ENCODE measurements at regions of chr7 and their contacts with region 1.

Region 1: GRCh38 chr7:13279854-13280435 is 592.5 kb downstream of the ARL4A start:
- DNase-seq: no peak
- H3K4me3 Mint-ChIP-seq: no peak overlapping the region
- H3K27ac Mint-ChIP-seq: no peak overlapping the region
- H3K4me1 Mint-ChIP-seq: no peaks in the 10 kb centered on the region
- H3K27me3 Mint-ChIP-seq: no peaks in the 10 kb centered on the region
- CTCF ChIP-seq: peak; percentile 59

Region 2: DNA sequence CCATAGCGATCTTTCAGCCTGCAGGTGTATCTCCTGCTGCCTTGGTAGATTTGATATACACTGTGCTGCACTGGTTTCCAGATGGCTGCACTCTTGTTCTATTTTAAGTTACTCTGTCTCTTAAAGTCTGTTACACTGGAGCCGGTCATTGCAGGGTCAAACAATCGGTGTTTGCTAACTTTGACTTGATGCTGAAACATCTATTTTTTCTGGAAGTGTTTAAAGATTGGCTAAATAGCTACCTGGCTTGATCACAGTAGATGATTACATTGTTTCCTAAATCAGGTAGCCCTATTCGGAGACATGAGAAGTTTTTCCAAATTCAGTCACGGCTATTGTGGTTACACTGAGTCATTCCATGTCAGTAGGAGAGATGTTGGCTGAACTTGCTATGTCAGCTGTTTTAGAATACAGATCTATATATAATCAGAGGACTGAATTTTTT is 134.7 kb after region 1 on chr7:
- CTCF ChIA-PET with region 1: no interaction called
- intact Hi-C with region 1: loop called (anchors 5 kb)
- DNase-seq: peak; percentile 19
- H3K4me3 Mint-ChIP-seq: no peak overlapping the region
- H3K27ac Mint-ChIP-seq: no peak overlapping the region
- H3K4me1 Mint-ChIP-seq: peaks cover 10% of the 10 kb centered on the region
- H3K27me3 Mint-ChIP-seq: no peaks in the 10 kb centered on the region
- CTCF ChIP-seq: no peak

Region 3: DNA sequence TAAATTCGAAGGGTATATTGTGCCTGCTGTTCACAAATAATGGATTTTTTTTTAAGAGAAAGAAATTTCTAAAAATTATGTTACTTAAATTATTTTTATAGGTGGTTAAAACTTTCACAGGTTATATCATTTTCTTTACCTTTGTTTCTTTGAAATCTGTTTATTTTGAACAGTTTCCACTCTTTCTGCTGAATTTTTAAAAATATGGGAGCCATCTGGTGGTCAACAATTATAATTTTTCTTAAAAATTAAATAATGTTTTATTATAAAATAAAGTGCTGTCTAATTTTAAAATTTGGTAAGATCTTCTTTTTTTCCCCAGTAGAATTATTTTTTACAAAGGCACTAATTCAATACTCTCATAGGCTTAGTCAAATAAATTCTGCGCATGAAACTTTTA is 445.6 kb after region 1 on chr7:
- CTCF ChIA-PET with region 1: interaction called, 4 read pairs
- intact Hi-C with region 1: loop called (anchors 1 kb)
- DNase-seq: no peak
- H3K4me3 Mint-ChIP-seq: no peak overlapping the region
- H3K27ac Mint-ChIP-seq: no peak overlapping the region
- H3K4me1 Mint-ChIP-seq: peaks cover 15% of the 10 kb centered on the region
- H3K27me3 Mint-ChIP-seq: no peaks in the 10 kb centered on the region
- CTCF ChIP-seq: peak; percentile 43

Region 4: GRCh38 chr7:13990984-13991790 is 711.2 kb after region 1 on chr7:
- CTCF ChIA-PET with region 1: no interaction called
- intact Hi-C with region 1: loop called (anchors 5 kb)
- DNase-seq: peak; percentile 99
- H3K4me3 Mint-ChIP-seq: no peak overlapping the region
- H3K27ac Mint-ChIP-seq: no peak overlapping the region
- H3K4me1 Mint-ChIP-seq: no peaks in the 10 kb centered on the region
- H3K27me3 Mint-ChIP-seq: no peaks in the 10 kb centered on the region
- CTCF ChIP-seq: no peak

Region 5: DNA sequence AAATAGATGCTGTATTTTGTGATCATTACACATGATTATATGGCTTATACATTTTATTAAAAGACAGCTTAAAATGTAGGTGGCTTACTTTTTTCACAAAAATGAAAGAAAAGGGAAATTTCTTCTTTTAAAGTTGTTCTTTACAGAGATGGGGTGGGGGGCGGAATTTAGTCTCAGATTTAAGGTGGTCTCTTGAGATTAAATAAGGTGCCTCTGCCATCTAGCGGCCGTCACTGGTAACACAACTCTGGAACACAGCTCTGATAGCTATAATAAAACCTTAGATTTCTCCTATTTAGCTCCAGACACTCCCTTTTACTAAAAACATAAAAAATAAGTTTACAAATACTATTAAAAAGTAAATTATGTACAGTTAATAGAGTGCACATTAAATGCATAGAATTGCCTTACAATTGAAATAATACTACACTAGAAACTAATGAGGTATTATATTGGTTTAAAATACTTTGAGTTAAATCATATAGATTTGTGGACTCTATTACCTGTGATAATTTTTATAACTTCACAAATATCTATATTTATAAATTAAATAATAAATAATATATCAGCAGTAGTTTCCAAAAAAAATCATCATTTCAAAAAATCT is 1411.8 kb after region 1 on chr7:
- CTCF ChIA-PET with region 1: interaction called, 38 read pairs
- intact Hi-C with region 1: loop called (anchors 1 kb)
- DNase-seq: peak; percentile 57
- H3K4me3 Mint-ChIP-seq: no peak overlapping the region
- H3K27ac Mint-ChIP-seq: no peak overlapping the region
- H3K4me1 Mint-ChIP-seq: peaks cover 21% of the 10 kb centered on the region
- H3K27me3 Mint-ChIP-seq: no peaks in the 10 kb centered on the region
- CTCF ChIP-seq: peak; percentile 95